Endothelial cell of umbilical vein (primary cell): ENCODE measurements at regions of chr4 and their contacts with region 1.

Region 1: DNA sequence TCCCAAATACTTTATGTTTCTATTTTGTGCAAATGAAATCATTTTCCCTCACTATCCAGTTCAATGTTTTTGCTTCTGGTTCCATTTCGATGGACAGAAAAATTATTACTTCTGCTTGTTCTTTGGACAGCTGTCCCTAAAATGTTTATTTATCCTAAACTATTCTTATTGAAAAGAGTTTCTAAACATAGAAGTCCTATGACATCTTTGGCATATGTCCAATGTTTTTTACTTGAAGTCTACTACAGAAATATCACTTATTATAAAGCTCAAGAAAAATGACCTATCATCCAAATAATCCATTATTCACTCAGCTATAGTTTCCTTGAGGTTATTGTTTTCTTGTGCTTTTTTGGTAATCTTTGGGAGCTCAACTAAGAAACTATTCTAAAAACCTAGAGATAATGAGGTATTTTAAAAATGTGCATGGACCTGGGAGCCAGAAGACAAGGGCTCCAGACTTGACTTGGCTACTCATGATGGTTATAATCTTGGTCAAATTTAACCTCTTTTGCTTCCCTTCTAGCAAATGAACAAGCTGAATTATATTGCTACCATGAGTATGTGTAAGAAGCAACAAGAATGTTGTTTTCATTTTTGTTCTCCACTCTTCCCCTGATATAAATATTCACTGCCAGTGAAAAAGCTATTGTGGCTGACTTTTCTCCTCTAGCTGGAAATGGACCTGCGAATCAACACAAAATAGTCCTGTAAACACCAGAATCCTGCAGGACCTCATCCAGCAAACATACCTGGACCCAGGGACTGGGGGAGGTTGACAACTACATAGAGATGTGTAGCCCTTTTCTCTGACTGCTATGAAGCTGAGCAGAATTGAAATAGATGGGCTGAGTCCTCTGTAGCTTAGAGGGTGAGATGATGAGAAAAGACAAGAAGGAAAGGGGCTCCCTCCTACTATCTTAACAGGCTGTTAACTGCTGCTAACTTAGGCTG is 137.4 kb downstream of the FRYL start:
- DNase-seq: peak; percentile 64
- H3K4me3 ChIP-seq: no peak overlapping the region
- H3K27ac ChIP-seq: no peak overlapping the region
- H3K4me1 ChIP-seq: peaks cover 29% of the 10 kb centered on the region
- H3K27me3 ChIP-seq: no peaks in the 10 kb centered on the region
- CTCF ChIP-seq: no peak
- POLR2A ChIP-seq: no peak

Region 2: GRCh38 chr4:47831026-47831679 is 811.5 kb before region 1 on chr4:
- CTCF ChIA-PET with region 1: no interaction called
- POLR2A ChIA-PET with region 1: no interaction called
- dilution Hi-C with region 1: no loop called
- intact Hi-C with region 1: no loop called
- DNase-seq: no peak
- H3K4me3 ChIP-seq: no peak overlapping the region
- H3K27ac ChIP-seq: no peak overlapping the region
- H3K4me1 ChIP-seq: peaks cover 9% of the 10 kb centered on the region
- H3K27me3 ChIP-seq: peaks cover 0 to 9% of the 10 kb centered on the region in 2 experiments
- CTCF ChIP-seq: no peak
- POLR2A ChIP-seq: no peak

Region 3: GRCh38 chr4:48588230-48589097 is 54.2 kb before region 1 on chr4:
- CTCF ChIA-PET with region 1: no interaction called
- POLR2A ChIA-PET with region 1: no interaction called
- dilution Hi-C with region 1: no loop called
- intact Hi-C with region 1: loop called (anchors 2 kb)
- DNase-seq: no peak
- H3K4me3 ChIP-seq: no peak overlapping the region
- H3K27ac ChIP-seq: peak overlapping the region; percentile 60
- H3K4me1 ChIP-seq: peaks cover 25% of the 10 kb centered on the region
- H3K27me3 ChIP-seq: no peaks in the 10 kb centered on the region
- CTCF ChIP-seq: no peak
- POLR2A ChIP-seq: no peak

Region 4: DNA sequence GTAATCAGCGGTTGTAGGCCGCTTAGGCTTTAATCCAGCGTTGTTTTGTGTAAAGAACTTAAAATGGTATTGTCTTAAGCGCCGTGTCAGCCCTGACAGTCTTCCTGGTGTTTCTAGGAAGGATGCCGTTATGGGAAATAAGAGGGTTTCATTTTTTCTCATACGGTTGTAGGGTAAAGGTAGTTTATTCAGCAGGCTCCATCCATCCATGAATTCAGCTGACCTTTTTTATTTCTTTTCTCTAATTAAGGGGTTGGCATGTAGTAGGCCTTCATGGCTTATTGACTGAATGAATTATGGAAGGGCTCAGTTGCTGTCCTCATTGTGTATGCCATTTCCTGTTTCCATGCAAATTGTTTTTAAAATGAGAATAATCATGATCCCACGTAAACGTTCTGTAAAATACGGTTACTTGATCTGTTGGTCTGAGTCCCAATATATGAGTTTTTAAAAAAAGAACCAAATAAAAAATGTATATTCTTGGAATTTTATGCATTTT is 188.9 kb after region 1 on chr4:
- CTCF ChIA-PET with region 1: no interaction called
- POLR2A ChIA-PET with region 1: no interaction called
- dilution Hi-C with region 1: no loop called
- intact Hi-C with region 1: no loop called
- DNase-seq: peak; percentile 52
- H3K4me3 ChIP-seq: peak overlapping the region; percentile 64 to 96 (median 66)
- H3K27ac ChIP-seq: peak overlapping the region; percentile 95
- H3K4me1 ChIP-seq: peaks cover 10% of the 10 kb centered on the region
- H3K27me3 ChIP-seq: no peaks in the 10 kb centered on the region
- CTCF ChIP-seq: no peak
- POLR2A ChIP-seq: no peak

Region 5: DNA sequence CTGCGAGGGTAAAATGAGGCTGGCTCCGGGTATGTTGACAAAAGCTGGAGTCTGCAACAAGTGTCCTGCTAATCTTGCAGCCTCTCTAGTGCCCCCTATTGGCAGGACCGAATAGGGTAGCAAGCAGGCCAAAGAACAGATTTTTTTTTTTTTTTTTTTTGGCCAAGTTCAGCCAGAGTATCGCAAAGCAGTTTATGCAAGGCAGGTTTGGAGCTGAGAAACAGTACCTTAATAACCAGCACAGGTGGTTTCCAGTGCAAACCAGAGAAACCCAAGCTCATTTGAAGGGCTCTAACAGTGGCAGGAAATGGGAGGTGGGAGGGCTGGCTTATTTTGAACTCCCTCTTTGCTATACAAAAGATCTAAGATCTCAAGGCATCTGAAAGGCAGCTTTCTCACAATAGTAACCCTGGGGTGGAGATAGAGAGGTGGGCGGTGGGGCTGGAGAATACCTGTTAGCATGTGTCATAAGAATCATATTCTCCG is 302.1 kb after region 1 on chr4:
- CTCF ChIA-PET with region 1: no interaction called
- POLR2A ChIA-PET with region 1: no interaction called
- dilution Hi-C with region 1: no loop called
- intact Hi-C with region 1: no loop called
- DNase-seq: no peak
- H3K4me3 ChIP-seq: no peak overlapping the region
- H3K27ac ChIP-seq: no peak overlapping the region
- H3K4me1 ChIP-seq: peaks cover 4% of the 10 kb centered on the region
- H3K27me3 ChIP-seq: peaks cover 0 to 6% of the 10 kb centered on the region in 2 experiments
- CTCF ChIP-seq: peak; percentile 19 to 30
- POLR2A ChIP-seq: no peak